GM13977 (cell line): ENCODE measurements at regions of chr6 and their contacts with region 1.

Region 1: GRCh38 chr6:36083446-36083845 is 46.9 kb upstream of the MAPK13 start:
- DNase-seq: no peak
- CTCF ChIP-seq: no peak

Region 2: GRCh38 chr6:36033935-36034334 is 49.5 kb before region 1 on chr6:
- in situ Hi-C with region 1: loop called (anchors 10 kb)
- DNase-seq: no peak
- CTCF ChIP-seq: no peak